Natural killer cell (primary cell): ENCODE measurements at regions of chrX and their contacts with region 1.

Region 1: DNA sequence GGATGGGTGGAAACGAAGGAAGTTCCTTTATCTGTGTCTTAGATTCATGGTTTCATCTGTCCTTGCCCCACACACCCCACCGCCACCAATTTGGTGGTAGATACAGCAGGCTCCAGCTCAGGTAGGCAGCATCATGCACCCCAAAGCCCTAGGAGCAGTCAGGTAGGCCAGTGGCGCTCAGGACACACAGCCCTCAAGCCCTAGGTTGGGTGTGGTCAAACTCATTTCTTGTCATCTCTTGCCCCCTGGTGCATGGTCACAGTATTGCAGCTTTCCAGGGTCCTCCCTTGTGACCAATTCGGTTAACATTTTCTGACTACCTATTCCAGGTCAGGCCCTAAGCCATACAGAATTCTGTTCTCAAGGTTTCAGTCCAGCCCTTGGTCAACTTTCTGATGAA is 14.5 kb upstream of the PRRG3 start:
- DNase-seq: peak; percentile 21 to 61
- ATAC-seq: peak in 2 of 3 donors; percentile 49 to 71
- H3K4me3 ChIP-seq: no peak overlapping the region
- H3K4me3 Mint-ChIP-seq: no peak overlapping the region
- H3K27ac ChIP-seq: no peak overlapping the region
- H3K27ac Mint-ChIP-seq: no peak overlapping the region
- H3K4me1 ChIP-seq: no peaks in the 10 kb centered on the region
- H3K4me1 Mint-ChIP-seq: no peaks in the 10 kb centered on the region
- H3K27me3 ChIP-seq: no peaks in the 10 kb centered on the region
- H3K27me3 Mint-ChIP-seq: peaks cover 3 to 27% of the 10 kb centered on the region in 2 donors
- CTCF ChIP-seq: peak; percentile 49

Region 2: GRCh38 chrX:151151665-151152267 is 529.0 kb before region 1 on chrX:
- intact Hi-C with region 1: loop called (anchors 1 kb)
- DNase-seq: peak in 1 of 2 donors; percentile 77
- ATAC-seq: peak in 1 of 3 donors; percentile 80
- H3K4me3 ChIP-seq: no peak overlapping the region
- H3K4me3 Mint-ChIP-seq: no peak overlapping the region
- H3K27ac ChIP-seq: no peak overlapping the region
- H3K27ac Mint-ChIP-seq: no peak overlapping the region
- H3K4me1 ChIP-seq: no peaks in the 10 kb centered on the region
- H3K4me1 Mint-ChIP-seq: no peaks in the 10 kb centered on the region
- H3K27me3 ChIP-seq: no peaks in the 10 kb centered on the region
- H3K27me3 Mint-ChIP-seq: peaks cover 8 to 41% of the 10 kb centered on the region in 2 donors
- CTCF ChIP-seq: peak; percentile 75

Region 3: DNA sequence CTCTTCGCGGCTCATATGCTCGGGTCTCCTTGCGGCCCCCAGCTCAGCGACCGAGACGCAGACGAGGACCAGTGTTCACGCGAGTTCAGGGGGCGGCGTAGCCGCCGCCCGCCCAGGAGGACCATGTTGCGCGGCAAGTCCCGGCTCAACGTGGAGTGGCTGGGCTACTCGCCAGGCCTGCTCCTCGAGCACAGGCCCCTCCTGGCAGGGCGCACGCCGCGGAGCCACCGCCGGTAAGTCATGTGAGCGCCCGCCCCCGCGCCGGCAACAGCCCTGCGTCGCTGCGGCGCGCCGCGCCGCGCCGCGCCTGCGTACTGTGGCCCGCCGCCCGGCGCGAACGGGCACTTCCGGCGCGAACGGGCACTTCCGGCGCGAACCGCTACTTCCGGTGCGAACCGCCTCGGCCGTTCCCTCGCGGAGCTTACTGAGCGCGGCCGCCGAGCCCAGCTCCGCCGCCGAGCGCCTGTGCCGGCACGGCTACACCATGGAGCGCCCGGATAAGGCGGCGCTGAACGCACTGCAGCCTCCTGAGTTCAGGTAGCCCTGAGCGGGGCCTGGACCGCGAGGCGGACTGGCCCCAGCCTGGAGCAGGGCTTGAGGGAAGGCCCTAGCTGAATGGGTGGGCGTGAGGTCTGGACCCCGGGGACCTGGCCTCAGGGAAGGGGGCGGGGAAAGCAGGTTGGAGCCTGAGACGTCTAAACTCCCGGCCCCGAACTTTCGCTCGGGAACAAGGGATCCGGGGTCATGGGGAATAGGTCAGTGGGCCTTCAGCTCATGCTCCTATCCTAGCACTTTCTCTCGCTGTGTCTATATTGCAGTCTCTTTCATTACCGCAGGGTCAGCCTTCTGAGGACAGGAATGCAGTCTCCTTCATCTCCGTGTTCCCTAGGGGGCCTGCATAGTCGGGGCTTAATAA is 283.7 kb before region 1 on chrX and contains the start of gene VMA21:
- intact Hi-C with region 1: loop called (anchors 2 kb)
- DNase-seq: peak; percentile 80 to 89
- ATAC-seq: peak; percentile 76 to 91 (median 83)
- H3K4me3 ChIP-seq: peak within 1 kb of the TSS; percentile 87
- H3K4me3 Mint-ChIP-seq: peak within 1 kb of the TSS; percentile 89
- H3K27ac ChIP-seq: peak within 1 kb of the TSS; percentile 99
- H3K27ac Mint-ChIP-seq: peak within 1 kb of the TSS; percentile 94 to 97
- H3K4me1 ChIP-seq: peaks cover 49% of the 10 kb centered on the region
- H3K4me1 Mint-ChIP-seq: peaks cover 54 to 58% of the 10 kb centered on the region in 2 donors
- H3K27me3 ChIP-seq: no peaks in the 10 kb centered on the region
- H3K27me3 Mint-ChIP-seq: no peaks in the 10 kb centered on the region
- CTCF ChIP-seq: no peak
- total RNA-seq, gene VMA21: 20.0 to 21.9 (median 21.4) TPM

Region 4: DNA sequence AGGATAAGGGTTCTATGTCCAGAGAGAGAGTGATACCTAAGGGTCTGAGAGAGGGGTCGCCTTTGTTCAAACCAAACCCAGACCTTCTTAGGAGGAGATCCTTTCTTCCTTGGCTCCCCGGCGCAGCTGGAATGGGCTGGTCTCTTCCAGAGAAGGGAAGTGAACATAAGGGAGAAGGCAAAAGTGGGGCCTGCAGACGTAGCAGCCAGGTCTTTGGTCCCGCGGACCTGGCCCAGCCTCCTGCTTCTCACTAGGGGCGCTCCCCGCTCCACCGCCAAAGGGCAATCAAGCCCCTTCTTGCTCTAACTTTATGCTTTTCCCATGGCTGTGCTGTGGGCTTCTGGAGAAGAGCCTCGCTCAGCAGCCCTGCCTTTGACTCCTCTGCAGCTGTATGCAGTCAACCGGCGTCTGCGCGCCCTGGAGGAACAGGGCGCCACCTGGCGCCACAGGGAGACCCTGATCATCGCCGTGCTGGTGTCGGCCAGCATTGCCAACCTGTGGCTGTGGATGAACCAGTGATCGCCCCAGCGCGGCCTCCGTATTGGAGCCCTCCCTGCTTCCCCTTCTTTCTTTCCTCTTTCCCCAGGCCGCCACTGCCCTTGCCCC is 41.5 kb after region 1 on chrX:
- intact Hi-C with region 1: no loop called
- DNase-seq: peak in 1 of 2 donors; percentile 1
- ATAC-seq: no peak
- H3K4me3 ChIP-seq: no peak overlapping the region
- H3K4me3 Mint-ChIP-seq: no peak overlapping the region
- H3K27ac ChIP-seq: no peak overlapping the region
- H3K27ac Mint-ChIP-seq: no peak overlapping the region
- H3K4me1 ChIP-seq: no peaks in the 10 kb centered on the region
- H3K4me1 Mint-ChIP-seq: no peaks in the 10 kb centered on the region
- H3K27me3 ChIP-seq: no peaks in the 10 kb centered on the region
- H3K27me3 Mint-ChIP-seq: peaks cover 0 to under 1% of the 10 kb centered on the region in 2 donors
- CTCF ChIP-seq: no peak